Astrocyte of the cerebellum (primary cell): ENCODE measurements at regions of chr19 and their contacts with region 1.

Region 1: DNA sequence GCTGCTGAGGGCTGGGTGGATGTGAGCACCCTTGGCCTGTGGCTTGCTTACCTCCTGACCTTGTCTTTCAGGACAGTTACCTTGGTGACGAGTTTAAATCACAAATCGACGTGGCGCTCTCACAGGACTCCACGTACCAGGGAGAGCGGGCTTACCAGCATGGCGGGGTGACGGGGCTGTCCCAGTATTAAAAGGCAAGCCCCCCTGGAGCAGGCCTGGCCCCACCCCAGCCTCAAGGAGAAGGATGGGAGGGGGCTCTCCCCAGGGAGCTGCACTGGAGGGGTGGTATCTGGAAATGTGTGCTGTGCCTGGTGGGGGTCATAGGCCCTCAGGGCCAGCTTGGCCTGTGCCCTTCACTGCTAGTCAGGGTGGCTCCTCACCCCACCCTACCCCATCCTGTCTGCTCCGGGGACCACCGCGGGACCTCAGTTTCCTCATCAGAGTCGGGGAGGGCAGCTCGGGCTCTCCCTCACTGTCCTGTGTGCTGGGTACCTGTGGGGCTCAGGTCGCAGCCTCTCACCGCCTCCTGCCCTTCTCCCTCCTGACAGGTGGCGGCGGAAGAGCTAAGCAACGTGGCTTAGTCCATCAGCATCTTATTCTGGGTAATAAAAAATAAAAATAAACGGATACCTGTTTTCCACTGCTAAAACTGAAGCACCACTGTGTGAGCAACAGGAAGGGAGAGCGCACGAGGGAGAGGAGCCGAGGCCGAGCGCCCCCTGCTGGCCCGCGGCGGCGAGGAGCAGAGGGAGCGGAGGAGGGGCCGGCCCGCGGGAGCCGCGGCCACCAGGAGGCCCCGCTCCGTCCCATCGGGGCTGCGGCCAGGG is 29.8 kb downstream of the CERS1 start:
- DNase-seq: no peak
- H3K4me3 ChIP-seq: no peak overlapping the region
- CTCF ChIP-seq: peak; percentile 99

Region 2: DNA sequence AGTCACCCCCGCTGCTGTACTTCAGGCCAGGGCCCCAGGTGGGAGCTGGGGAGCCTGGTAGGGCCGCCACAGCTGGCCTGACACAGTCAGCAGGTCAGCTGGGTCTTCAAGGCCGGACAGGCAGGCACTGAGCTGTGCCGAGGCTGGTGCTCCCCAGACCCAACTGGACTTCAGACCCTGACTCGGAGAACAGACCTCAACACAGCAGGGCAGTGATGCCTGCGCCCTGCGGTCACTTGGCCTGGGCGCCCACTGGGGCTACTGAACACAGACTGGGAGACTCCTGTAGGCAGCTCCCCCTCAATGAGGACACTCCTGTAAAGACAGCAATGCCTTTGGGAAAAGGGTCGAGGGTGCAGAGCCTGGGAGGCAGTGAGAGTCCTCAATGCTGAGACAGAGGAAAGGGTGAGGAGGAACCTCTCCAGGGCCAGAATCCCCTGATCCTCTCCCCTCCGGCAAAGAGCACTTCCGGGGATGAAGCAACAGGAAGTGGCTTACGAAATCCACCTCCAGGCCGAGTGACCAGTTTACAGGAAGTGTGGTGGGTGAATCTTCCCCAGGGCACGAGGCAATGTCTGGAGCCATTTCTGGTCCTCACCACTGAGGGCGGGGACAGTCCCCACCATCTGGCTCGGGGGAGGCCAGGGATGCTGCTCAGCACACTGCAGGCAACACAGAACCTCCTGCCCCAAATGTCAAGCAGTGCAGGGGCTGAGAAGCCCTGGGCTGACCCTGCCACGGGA is 387.4 kb before region 1 on chr19:
- in situ Hi-C with region 1: loop called (anchors 25 kb)
- DNase-seq: no peak
- H3K4me3 ChIP-seq: no peak overlapping the region
- CTCF ChIP-seq: no peak